ENCODE measurements at regions of chr20 and their contacts with region 1.

Region 1: GRCh38 chr20:17504898-17505635 is 26.1 kb downstream of the BFSP1 start:
- DNase-seq: no peak
- ATAC-seq: peak; percentile 81 to 88
- H3K4me3 ChIP-seq: peak overlapping the region; percentile 47 to 63 (median 55)
- H3K27ac ChIP-seq: peak overlapping the region in 2 of 4 donors; percentile 30 to 42
- H3K4me1 ChIP-seq: peaks cover 8 to 11% of the 10 kb centered on the region in 2 donors
- H3K27me3 ChIP-seq: no peaks in the 10 kb centered on the region
- CTCF ChIP-seq: peak; percentile 40 to 75 (median 58)
- POLR2A ChIP-seq: no peak

Region 2: DNA sequence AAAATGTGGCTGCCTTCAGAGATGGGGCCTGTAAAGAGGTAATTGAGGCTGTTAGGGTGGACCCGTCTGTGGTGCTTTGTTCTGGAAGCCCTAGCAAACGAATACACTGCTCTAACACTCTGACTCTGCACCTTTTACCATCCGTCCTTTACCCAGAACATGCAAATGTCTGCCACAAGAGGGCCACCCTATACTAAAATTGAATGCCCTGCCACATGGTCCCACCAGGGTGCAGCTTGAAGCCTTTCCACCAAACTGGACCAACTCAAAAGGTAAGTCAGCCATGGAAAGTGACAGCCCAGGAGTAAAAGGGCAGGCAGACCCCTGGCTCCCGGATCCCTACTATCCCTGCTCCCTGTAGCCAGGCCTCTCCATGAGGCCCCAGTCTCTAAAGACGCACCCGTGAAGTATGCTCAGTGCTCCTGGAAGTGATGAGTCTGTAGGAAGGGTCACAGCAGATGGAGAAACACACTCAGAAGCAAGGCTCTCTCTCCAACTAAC is 31.9 kb after region 1 on chr20:
- in situ Hi-C with region 1: no loop called
- intact Hi-C with region 1: no loop called
- DNase-seq: peak; percentile 40 to 50
- ATAC-seq: peak; percentile 96 to 97
- H3K4me3 ChIP-seq: no peak overlapping the region
- H3K27ac ChIP-seq: no peak overlapping the region
- H3K4me1 ChIP-seq: no peaks in the 10 kb centered on the region
- H3K27me3 ChIP-seq: peaks cover 0 to 1% (median 0%) of the 10 kb centered on the region in 3 donors
- CTCF ChIP-seq: peak; percentile 84 to 91 (median 88)
- POLR2A ChIP-seq: no peak

Region 3: DNA sequence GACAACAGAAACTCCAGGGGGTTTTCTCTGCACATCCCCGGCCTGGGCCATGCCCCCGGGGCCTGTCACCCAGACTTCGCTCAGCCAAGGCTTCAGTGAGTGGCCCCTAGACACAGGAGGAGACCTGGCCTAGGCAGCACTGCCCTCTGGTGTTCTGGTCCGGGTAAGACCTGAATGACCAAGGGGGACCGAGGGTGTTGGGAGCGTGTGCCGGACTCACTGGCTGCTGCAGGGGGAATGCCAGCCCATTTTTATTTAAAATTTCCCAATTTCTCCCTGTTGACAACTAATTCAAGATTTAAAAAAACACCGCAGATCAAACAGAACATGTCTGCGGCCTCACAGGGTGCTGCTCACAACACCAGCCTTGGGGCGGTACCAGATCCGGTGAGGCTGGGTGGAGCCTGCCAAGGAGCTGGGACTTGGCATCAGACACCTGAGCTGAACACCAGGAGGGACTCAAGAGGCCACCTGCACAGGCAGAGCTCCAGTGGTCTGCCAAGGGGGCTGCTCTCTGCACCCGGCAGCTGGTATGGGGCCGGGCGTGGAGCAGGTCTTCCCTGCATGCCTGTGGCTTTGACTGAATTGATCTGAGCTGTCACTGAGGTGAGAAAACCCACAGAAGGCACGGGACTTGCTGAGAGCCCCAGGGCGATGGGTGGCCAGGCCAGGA is 112.6 kb after region 1 on chr20:
- in situ Hi-C with region 1: no loop called
- intact Hi-C with region 1: loop called (anchors 1 kb)
- DNase-seq: no peak
- ATAC-seq: peak; percentile 57 to 62
- H3K4me3 ChIP-seq: no peak overlapping the region
- H3K27ac ChIP-seq: no peak overlapping the region
- H3K4me1 ChIP-seq: peaks cover 0 to 7% of the 10 kb centered on the region in 2 donors
- H3K27me3 ChIP-seq: no peaks in the 10 kb centered on the region
- CTCF ChIP-seq: peak; percentile 65 to 87 (median 83)
- POLR2A ChIP-seq: no peak

Region 4: DNA sequence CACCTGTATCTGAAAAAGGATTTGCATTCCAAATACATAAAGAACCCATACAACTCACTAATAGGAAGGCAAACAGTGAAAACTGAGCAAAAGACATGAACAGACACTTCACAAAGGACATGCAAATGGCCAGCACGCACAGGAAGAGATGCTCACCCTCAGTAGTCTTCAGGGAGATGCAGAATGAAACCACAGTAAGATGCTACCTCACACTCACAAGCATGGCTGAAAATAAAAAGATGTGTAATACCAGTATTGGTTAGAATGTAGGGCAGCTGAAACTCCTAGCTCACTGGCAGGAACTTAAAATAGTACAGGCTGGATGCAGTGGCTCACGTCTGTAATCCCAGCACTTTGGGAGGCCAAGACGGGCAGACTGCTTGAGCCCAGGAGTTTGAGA is 399.0 kb after region 1 on chr20:
- in situ Hi-C with region 1: loop called in 2 of 4 experiments (anchors 10 to 25 kb)
- intact Hi-C with region 1: loop called (anchors 2 kb)
- DNase-seq: no peak
- ATAC-seq: peak in 1 of 2 donors; percentile 90
- H3K4me3 ChIP-seq: no peak overlapping the region
- H3K27ac ChIP-seq: no peak overlapping the region
- H3K4me1 ChIP-seq: no peaks in the 10 kb centered on the region
- H3K27me3 ChIP-seq: no peaks in the 10 kb centered on the region
- CTCF ChIP-seq: no peak
- POLR2A ChIP-seq: no peak

Region 5: GRCh38 chr20:17995967-17996819 is 491.1 kb after region 1 on chr20:
- in situ Hi-C with region 1: no loop called
- intact Hi-C with region 1: loop called (anchors 5 kb)
- DNase-seq: peak in 1 of 2 donors; percentile 18
- ATAC-seq: peak; percentile 61 to 72
- H3K4me3 ChIP-seq: peak overlapping the region in 1 of 4 donors; percentile 13
- H3K27ac ChIP-seq: no peak overlapping the region
- H3K4me1 ChIP-seq: peaks cover 0 to 4% of the 10 kb centered on the region in 2 donors
- H3K27me3 ChIP-seq: no peaks in the 10 kb centered on the region
- CTCF ChIP-seq: peak; percentile 86 to 99 (median 98)
- POLR2A ChIP-seq: no peak

Measured in gastrocnemius medialis (tissue), 4 donors.